Left ventricle myocardium inferior (tissue), 1 donor: ENCODE measurements at regions of chr3 and their contacts with region 1.

Region 1: GRCh38 chr3:153284282-153284938 is 122.4 kb downstream of the RAP2B start:
- DNase-seq: no peak
- H3K4me3 ChIP-seq: no peak overlapping the region
- H3K27ac ChIP-seq: peak overlapping the region; percentile 64
- H3K4me1 ChIP-seq: peaks cover 26% of the 10 kb centered on the region
- H3K27me3 ChIP-seq: no peaks in the 10 kb centered on the region
- CTCF ChIP-seq: no peak

Region 2: DNA sequence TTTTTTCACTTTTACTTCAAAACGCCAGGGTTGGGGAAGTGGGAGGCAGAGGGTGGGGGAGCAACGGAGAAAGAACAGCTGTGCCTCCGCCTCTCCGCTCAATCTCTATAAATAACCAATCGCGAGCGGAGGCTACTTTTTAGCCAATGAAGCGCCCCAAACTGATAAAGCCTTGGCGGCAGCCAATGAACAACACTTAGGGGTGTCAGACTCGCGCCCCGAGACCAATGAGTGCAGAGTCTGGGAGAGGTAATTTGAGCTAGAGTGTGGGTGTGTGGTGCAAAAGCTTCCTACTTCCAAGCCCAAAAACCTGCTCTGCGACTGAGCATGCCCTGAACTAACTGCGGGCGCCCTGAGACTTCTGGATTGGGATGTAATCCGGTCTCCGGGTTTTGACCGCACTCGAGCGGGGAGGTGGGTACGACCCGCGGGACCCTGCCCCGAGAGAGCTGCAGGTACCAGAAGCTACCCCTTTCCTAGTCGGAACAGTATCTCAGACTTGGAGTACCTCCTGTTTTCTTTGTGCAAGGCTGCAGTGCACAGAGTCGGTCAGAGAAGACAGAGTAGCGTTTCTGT is 123.2 kb before region 1 on chr3:
- intact Hi-C with region 1: loop called (anchors 10 kb)
- DNase-seq: peak; percentile 91
- H3K4me3 ChIP-seq: peak overlapping the region; percentile 97
- H3K27ac ChIP-seq: peak overlapping the region; percentile 94
- H3K4me1 ChIP-seq: peaks cover 56% of the 10 kb centered on the region
- H3K27me3 ChIP-seq: no peaks in the 10 kb centered on the region
- CTCF ChIP-seq: no peak